CD8-positive, alpha-beta T cell (primary cell): ENCODE measurements at regions of chr13 and their contacts with region 1.

Region 1: GRCh38 chr13:113296842-113297369 is at the start of gene LAMP1:
- DNase-seq: peak; percentile 97 to 100 (median 99)
- ATAC-seq: peak; percentile 83
- H3K4me3 ChIP-seq: peak within 1 kb of the TSS; percentile 72 to 93
- H3K4me3 Mint-ChIP-seq: peak within 1 kb of the TSS; percentile 96
- H3K27ac ChIP-seq: peak within 1 kb of the TSS; percentile 83 to 88
- H3K27ac Mint-ChIP-seq: peak within 1 kb of the TSS; percentile 100
- H3K4me1 ChIP-seq: peaks cover 31% of the 10 kb centered on the region
- H3K4me1 Mint-ChIP-seq: peaks cover 39% of the 10 kb centered on the region
- H3K27me3 ChIP-seq: peaks cover 2 to 4% of the 10 kb centered on the region in 2 experiments
- H3K27me3 Mint-ChIP-seq: peaks cover 12% of the 10 kb centered on the region
- CTCF ChIP-seq: no peak
- total RNA-seq, gene LAMP1: 84.8 to 87.5 TPM

Region 2: GRCh38 chr13:112968908-112969691 is 327.8 kb before region 1 on chr13 and contains the start of gene MCF2L:
- CTCF ChIA-PET with region 1: no interaction called
- POLR2A ChIA-PET with region 1: interaction called, 4 read pairs
- intact Hi-C with region 1: loop called (anchors 1 to 5 kb)
- DNase-seq: peak; percentile 31 to 83 (median 69)
- ATAC-seq: peak; percentile 75
- H3K4me3 ChIP-seq: peak within 1 kb of the TSS; percentile 63 to 66
- H3K4me3 Mint-ChIP-seq: peak within 1 kb of the TSS; percentile 96
- H3K27ac ChIP-seq: peak within 1 kb of the TSS; percentile 53 to 69
- H3K27ac Mint-ChIP-seq: peak within 1 kb of the TSS; percentile 95
- H3K4me1 ChIP-seq: peaks cover 23% of the 10 kb centered on the region
- H3K4me1 Mint-ChIP-seq: peaks cover 41% of the 10 kb centered on the region
- H3K27me3 ChIP-seq: no peaks in the 10 kb centered on the region
- H3K27me3 Mint-ChIP-seq: no peaks in the 10 kb centered on the region
- CTCF ChIP-seq: no peak
- total RNA-seq, gene MCF2L: 13.7 to 15.0 TPM

Region 3: DNA sequence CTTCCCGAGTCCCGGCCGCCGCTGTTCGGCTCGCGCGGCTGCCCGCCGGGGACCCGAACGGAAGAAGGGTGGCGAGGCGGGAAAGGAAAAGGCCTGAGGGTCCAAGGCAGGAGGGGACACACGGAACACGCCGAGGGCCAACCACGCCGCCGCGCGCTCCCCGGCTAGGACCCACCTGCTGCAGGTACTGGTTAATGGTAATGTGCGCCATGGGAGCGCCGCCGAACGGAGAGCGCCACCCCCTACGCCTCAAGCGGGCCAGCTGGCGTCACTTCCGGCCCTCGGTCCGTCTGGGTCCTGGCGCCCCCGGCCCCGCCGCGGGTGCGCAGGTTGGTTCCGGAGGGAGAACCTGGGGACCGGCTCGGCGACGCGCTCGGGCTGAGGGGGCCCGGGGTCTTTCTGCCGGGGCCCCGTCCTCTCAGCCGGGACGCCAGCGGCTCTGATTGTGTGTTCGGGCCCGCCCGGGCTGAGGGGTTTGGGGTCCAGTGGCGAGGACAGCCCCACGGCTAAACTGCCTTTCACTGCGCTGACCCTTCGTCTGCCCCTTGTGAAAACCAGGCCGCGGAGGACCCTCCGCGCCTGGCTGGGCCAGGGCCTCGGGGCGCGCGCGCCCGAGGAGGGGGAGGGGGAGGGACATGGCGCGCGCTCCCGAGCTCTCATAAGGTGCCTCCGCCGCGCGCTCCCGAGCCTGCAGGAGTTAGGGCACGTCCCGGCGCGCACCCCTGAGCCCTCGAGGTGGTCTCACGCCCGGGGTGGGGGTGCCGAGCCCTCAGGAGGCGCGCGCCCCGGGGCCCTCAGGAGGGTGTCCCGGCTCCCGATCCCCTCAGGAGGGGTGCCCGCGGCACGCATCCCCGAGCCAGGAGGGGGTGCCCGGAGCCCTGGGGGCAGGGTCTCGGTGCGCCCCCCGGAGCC is 88.2 kb before region 1 on chr13 and contains the start of gene PCID2:
- CTCF ChIA-PET with region 1: no interaction called
- POLR2A ChIA-PET with region 1: interaction called, 13 read pairs
- intact Hi-C with region 1: loop called (anchors 1 kb)
- DNase-seq: peak; percentile 87 to 96 (median 91)
- ATAC-seq: peak; percentile 67
- H3K4me3 ChIP-seq: peak within 1 kb of the TSS; percentile 83 to 93
- H3K4me3 Mint-ChIP-seq: peak within 1 kb of the TSS; percentile 93
- H3K27ac ChIP-seq: peak within 1 kb of the TSS; percentile 90 to 95
- H3K27ac Mint-ChIP-seq: peak within 1 kb of the TSS; percentile 95
- H3K4me1 ChIP-seq: peaks cover 52% of the 10 kb centered on the region
- H3K4me1 Mint-ChIP-seq: peaks cover 58% of the 10 kb centered on the region
- H3K27me3 ChIP-seq: no peaks in the 10 kb centered on the region
- H3K27me3 Mint-ChIP-seq: no peaks in the 10 kb centered on the region
- CTCF ChIP-seq: no peak
- total RNA-seq, gene PCID2: 30.5 to 34.1 TPM

Region 4: DNA sequence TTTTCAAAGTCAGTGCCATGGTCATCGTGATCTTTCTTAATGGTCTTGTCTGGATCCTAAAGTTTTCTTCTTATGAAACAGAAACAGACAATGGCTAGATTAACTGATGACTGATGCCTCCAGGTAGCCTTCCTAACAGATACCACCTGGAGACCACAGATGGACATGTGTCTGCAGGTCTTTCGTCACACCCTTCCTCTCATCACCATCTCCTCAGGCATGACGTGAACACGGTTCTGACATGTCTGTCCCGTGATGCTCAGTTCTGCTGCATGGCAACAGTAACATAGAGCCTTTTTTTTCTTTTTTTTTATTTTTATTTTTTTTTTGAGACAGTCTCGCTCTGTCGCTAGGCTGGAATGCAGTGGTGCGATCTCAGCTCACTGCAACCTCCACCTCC is 13.0 kb before region 1 on chr13:
- CTCF ChIA-PET with region 1: no interaction called
- POLR2A ChIA-PET with region 1: no interaction called
- intact Hi-C with region 1: no loop called
- DNase-seq: no peak
- ATAC-seq: no peak
- H3K4me3 ChIP-seq: no peak overlapping the region
- H3K4me3 Mint-ChIP-seq: no peak overlapping the region
- H3K27ac ChIP-seq: no peak overlapping the region
- H3K27ac Mint-ChIP-seq: no peak overlapping the region
- H3K4me1 ChIP-seq: no peaks in the 10 kb centered on the region
- H3K4me1 Mint-ChIP-seq: no peaks in the 10 kb centered on the region
- H3K27me3 ChIP-seq: no peaks in the 10 kb centered on the region
- H3K27me3 Mint-ChIP-seq: peaks cover 28% of the 10 kb centered on the region
- CTCF ChIP-seq: no peak

Region 5: GRCh38 chr13:113393563-113394338 is 96.8 kb after region 1 on chr13:
- CTCF ChIA-PET with region 1: no interaction called
- POLR2A ChIA-PET with region 1: interaction called, 5 read pairs
- intact Hi-C with region 1: loop called (anchors 1 to 2 kb)
- DNase-seq: peak; percentile 66 to 88 (median 81)
- ATAC-seq: peak; percentile 96
- H3K4me3 ChIP-seq: peak overlapping the region; percentile 61 to 67
- H3K4me3 Mint-ChIP-seq: peak overlapping the region; percentile 87
- H3K27ac ChIP-seq: no peak overlapping the region
- H3K27ac Mint-ChIP-seq: peak overlapping the region; percentile 72
- H3K4me1 ChIP-seq: peaks cover 8% of the 10 kb centered on the region
- H3K4me1 Mint-ChIP-seq: peaks cover 3% of the 10 kb centered on the region
- H3K27me3 ChIP-seq: no peaks in the 10 kb centered on the region
- H3K27me3 Mint-ChIP-seq: no peaks in the 10 kb centered on the region
- CTCF ChIP-seq: peak; percentile 77